CD8-positive, alpha-beta T cell (primary cell): ENCODE measurements at regions of chr1 and their contacts with region 1.

Region 1: DNA sequence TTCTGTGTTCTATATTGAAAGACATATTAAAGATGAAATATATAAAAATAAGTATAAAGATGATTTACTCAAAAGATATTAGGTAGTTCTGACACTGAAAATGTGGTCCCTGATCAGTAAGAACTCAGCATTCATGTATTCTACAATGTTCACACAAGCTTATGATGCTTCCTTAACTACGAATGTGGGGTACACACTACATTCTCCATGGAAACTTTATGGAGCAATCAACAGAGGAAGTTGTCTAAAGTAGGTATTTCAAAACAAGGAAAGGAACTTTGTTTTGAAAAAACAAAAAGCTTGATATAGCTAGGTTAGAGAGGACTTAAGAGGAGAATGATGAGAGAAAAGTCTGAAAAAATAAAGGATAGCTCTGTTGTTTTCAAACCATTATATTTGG is 119.7 kb upstream of the RGS18 start:
- DNase-seq: no peak
- ATAC-seq: no peak
- H3K4me3 ChIP-seq: no peak overlapping the region
- H3K4me3 Mint-ChIP-seq: no peak overlapping the region
- H3K27ac ChIP-seq: no peak overlapping the region
- H3K27ac Mint-ChIP-seq: no peak overlapping the region
- H3K4me1 ChIP-seq: no peaks in the 10 kb centered on the region
- H3K4me1 Mint-ChIP-seq: no peaks in the 10 kb centered on the region
- H3K27me3 ChIP-seq: no peaks in the 10 kb centered on the region
- H3K27me3 Mint-ChIP-seq: no peaks in the 10 kb centered on the region
- CTCF ChIP-seq: no peak

Region 2: GRCh38 chr1:192067360-192067759 is 28.8 kb after region 1 on chr1:
- CTCF ChIA-PET with region 1: no interaction called
- POLR2A ChIA-PET with region 1: no interaction called
- intact Hi-C with region 1: loop called in 1 of 2 experiments (anchors 1 kb)
- DNase-seq: no peak
- ATAC-seq: no peak
- H3K4me3 ChIP-seq: no peak overlapping the region
- H3K4me3 Mint-ChIP-seq: no peak overlapping the region
- H3K27ac ChIP-seq: no peak overlapping the region
- H3K27ac Mint-ChIP-seq: no peak overlapping the region
- H3K4me1 ChIP-seq: no peaks in the 10 kb centered on the region
- H3K4me1 Mint-ChIP-seq: no peaks in the 10 kb centered on the region
- H3K27me3 ChIP-seq: no peaks in the 10 kb centered on the region
- H3K27me3 Mint-ChIP-seq: no peaks in the 10 kb centered on the region
- CTCF ChIP-seq: no peak

Region 3: GRCh38 chr1:192080684-192081083 is 42.1 kb after region 1 on chr1:
- CTCF ChIA-PET with region 1: no interaction called
- POLR2A ChIA-PET with region 1: no interaction called
- intact Hi-C with region 1: no loop called
- DNase-seq: no peak
- ATAC-seq: no peak
- H3K4me3 ChIP-seq: no peak overlapping the region
- H3K4me3 Mint-ChIP-seq: no peak overlapping the region
- H3K27ac ChIP-seq: no peak overlapping the region
- H3K27ac Mint-ChIP-seq: no peak overlapping the region
- H3K4me1 ChIP-seq: no peaks in the 10 kb centered on the region
- H3K4me1 Mint-ChIP-seq: no peaks in the 10 kb centered on the region
- H3K27me3 ChIP-seq: no peaks in the 10 kb centered on the region
- H3K27me3 Mint-ChIP-seq: no peaks in the 10 kb centered on the region
- CTCF ChIP-seq: no peak